GM12878 (cell line): ENCODE measurements at regions of chr9 and their contacts with region 1.

Region 1: GRCh38 chr9:24899463-24899862 is 353.8 kb upstream of the IZUMO3 start:
- DNase-seq: no peak
- ATAC-seq: no peak
- H3K4me3 ChIP-seq: no peak overlapping the region
- H3K27ac ChIP-seq: no peak overlapping the region
- H3K4me1 ChIP-seq: no peaks in the 10 kb centered on the region
- H3K27me3 ChIP-seq: no peaks in the 10 kb centered on the region
- CTCF ChIP-seq: no peak
- EP300 ChIP-seq: no peak
- POLR2A ChIP-seq: no peak
- RAD21 ChIP-seq: no peak

Region 2: GRCh38 chr9:24793787-24794186 is 105.7 kb before region 1 on chr9:
- CTCF ChIA-PET with region 1: no interaction called
- POLR2A ChIA-PET with region 1: no interaction called
- RAD21 ChIA-PET with region 1: no interaction called
- SMC1A ChIA-PET with region 1: no interaction called
- in situ Hi-C with region 1: loop called (anchors 25 kb)
- intact Hi-C with region 1: no loop called
- DNase-seq: no peak
- ATAC-seq: no peak
- H3K4me3 ChIP-seq: no peak overlapping the region
- H3K27ac ChIP-seq: no peak overlapping the region
- H3K4me1 ChIP-seq: no peaks in the 10 kb centered on the region
- H3K27me3 ChIP-seq: no peaks in the 10 kb centered on the region
- CTCF ChIP-seq: no peak
- EP300 ChIP-seq: no peak
- POLR2A ChIP-seq: no peak
- RAD21 ChIP-seq: no peak

Region 3: GRCh38 chr9:24939109-24939850 is 39.8 kb after region 1 on chr9:
- CTCF ChIA-PET with region 1: no interaction called
- POLR2A ChIA-PET with region 1: no interaction called
- RAD21 ChIA-PET with region 1: no interaction called
- SMC1A ChIA-PET with region 1: no interaction called
- in situ Hi-C with region 1: no loop called
- intact Hi-C with region 1: no loop called
- DNase-seq: no peak
- ATAC-seq: peak; percentile 21; the same call in 2 of the 3 replicates
- H3K4me3 ChIP-seq: no peak overlapping the region
- H3K27ac ChIP-seq: no peak overlapping the region
- H3K4me1 ChIP-seq: no peaks in the 10 kb centered on the region
- H3K27me3 ChIP-seq: no peaks in the 10 kb centered on the region
- CTCF ChIP-seq: no peak
- EP300 ChIP-seq: no peak
- POLR2A ChIP-seq: no peak
- RAD21 ChIP-seq: no peak